Aorta (tissue), 5 donors: ENCODE measurements at regions of chr6 and their contacts with region 1.

Region 1: DNA sequence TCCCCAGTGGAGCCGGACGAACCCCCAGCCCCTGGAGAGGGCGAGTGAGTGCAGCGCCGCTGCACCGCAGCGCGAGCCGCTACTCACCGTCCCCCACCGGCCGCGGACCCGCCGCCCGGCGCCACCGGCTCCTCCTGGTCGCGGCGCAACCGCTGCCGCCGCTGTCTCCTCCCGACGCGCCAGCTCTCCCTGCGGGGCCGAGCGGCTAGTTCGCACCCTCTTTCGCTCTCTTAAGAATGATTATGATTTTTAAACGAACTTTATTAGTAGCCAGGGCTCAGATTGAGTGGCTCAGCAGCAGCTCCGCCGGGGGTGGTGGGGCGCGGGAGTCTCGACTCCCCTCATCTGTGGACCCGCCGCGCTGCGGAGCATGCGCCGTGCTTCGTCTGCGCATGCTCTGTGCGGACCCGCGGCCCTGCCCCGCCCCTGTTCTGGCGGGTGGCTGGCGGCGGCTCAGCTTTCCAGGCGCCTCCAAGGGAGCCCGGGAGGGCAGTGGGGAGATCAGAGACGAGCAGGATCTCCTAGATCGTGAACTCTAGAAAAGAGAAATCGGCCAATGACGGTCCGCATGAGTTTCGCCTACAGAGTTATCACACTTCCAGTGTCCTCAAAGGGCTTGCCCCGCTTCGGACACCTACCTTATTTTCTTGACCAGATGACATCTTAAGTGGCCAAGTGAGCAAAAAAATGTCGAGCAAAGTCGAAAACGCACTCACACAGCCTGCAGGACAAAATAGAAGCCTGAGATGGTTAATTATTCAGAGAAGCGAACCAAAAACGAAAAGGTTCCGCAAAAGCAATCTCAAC is at the start of gene RAB23:
- DNase-seq: peak; percentile 89 to 94
- ATAC-seq: peak; percentile 97
- H3K4me3 ChIP-seq: peak within 1 kb of the TSS; percentile 85 to 94
- H3K27ac ChIP-seq: peak within 1 kb of the TSS; percentile 58 to 93
- H3K4me1 ChIP-seq: no peaks in the 10 kb centered on the region
- H3K27me3 ChIP-seq: no peaks in the 10 kb centered on the region
- total RNA-seq, gene RAB23: 55.9 to 59.2 TPM

Region 2: DNA sequence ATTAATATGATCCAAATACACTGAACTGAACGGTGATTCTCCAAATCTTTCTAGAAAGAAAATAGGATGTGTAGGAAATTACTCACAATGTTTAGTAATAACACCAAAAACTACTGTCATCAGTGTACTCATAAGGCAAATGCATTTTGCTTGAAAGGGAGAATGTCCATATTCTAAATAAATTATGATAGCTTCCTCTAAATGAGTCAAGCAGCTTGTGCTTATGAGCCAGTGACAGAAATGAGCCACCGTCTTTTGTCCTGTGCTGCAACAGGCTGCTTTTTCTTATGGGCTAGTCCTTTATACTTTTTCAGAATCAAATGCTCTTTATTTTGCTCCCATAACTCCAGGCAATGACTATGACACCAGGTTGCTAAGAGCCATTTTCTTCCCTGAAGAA is 136.7 kb before region 1 on chr6:
- intact Hi-C with region 1: no loop called
- DNase-seq: no peak
- ATAC-seq: no peak
- H3K4me3 ChIP-seq: no peak overlapping the region
- H3K27ac ChIP-seq: no peak overlapping the region
- H3K4me1 ChIP-seq: no peaks in the 10 kb centered on the region
- H3K27me3 ChIP-seq: no peaks in the 10 kb centered on the region

Region 3: GRCh38 chr6:57172136-57173055 is 49.7 kb before region 1 on chr6 and contains the start of gene BAG2:
- intact Hi-C with region 1: loop called (anchors 5 kb)
- DNase-seq: peak; percentile 94 to 97
- ATAC-seq: peak; percentile 94
- H3K4me3 ChIP-seq: peak within 1 kb of the TSS; percentile 83 to 98
- H3K27ac ChIP-seq: peak within 1 kb of the TSS; percentile 64 to 88
- H3K4me1 ChIP-seq: peaks cover 0 to 4% of the 10 kb centered on the region in 2 donors
- H3K27me3 ChIP-seq: no peaks in the 10 kb centered on the region
- total RNA-seq, gene BAG2: 18.8 to 32.9 TPM

Region 4: DNA sequence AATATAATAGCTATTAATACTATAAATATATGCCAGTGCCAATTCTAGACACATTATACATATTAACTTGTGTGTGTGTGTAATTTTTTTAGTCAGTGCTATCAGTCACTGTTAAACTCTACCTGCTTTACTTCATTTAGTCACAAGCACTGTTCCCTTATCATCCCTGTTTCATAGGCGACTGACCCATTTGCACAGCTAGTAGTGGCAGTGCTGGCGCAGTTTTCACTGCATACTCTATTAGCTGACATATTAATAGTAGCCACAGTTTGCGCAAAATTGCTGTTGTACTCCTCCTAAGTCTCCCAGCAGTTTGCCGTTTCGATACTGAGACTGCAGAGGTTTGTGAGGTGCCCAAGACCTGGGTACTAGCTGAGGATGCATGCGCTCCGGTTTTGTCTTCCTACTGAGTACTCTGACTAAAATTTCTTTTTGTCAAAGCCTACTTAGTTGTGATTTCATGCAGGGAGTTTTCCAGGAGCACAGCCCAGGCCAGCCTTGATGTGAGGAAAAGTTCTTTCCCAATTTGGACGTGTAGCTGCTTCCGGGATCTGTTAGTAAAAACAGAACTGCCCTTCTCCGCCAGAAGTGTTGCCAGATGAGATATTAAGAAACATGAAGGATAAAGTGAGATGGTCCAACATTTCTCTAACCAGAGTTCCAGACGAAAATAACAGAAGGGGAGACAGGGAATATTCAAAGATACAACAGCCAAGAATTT is 44.4 kb before region 1 on chr6:
- intact Hi-C with region 1: loop called (anchors 5 kb)
- DNase-seq: peak; percentile 65 to 74
- ATAC-seq: peak; percentile 71
- H3K4me3 ChIP-seq: peak overlapping the region in 1 of 2 donors; percentile 9
- H3K27ac ChIP-seq: peak overlapping the region; percentile 73 to 92
- H3K4me1 ChIP-seq: peaks cover 0 to 8% of the 10 kb centered on the region in 2 donors
- H3K27me3 ChIP-seq: no peaks in the 10 kb centered on the region

Region 5: DNA sequence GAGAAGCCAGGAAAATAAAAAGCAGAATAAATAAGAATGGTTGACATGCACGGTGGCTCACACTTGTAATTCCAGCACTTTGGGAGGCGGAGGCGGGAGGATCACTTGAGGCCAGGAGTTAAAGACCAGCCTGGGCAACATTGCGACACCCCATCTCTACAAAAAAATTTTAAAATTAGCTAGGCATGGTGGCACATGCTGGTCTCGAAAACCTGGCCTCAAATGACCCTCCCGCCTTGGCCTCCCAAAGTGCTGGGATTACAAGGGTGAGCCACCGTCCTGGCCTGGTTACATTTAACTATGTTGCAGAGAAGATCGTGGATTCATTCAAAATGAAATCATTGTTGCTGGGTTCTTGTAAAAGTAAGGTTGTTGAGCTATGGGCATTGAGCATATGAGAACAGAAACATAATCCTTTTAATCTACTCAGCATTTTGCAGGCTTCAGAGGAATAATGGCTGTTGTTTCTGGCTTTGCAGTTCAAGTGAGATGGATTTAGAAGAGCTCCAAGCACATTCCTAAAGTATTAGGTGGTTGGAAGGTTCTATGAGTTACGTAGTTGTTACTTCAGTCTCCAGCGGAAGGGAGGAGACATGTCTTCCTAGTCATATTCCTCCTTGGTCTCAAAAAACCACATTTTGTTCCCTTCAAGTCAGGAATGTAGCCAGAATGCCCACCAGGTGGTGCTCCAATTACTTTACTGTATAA is 45.6 kb after region 1 on chr6:
- intact Hi-C with region 1: loop called in 1 of 2 experiments (anchors 5 kb)
- DNase-seq: peak in 1 of 2 donors; percentile 75
- ATAC-seq: peak; percentile 94
- H3K4me3 ChIP-seq: no peak overlapping the region
- H3K27ac ChIP-seq: peak overlapping the region in 1 of 2 donors; percentile 76
- H3K4me1 ChIP-seq: peaks cover 0 to 22% of the 10 kb centered on the region in 2 donors
- H3K27me3 ChIP-seq: no peaks in the 10 kb centered on the region

Region 6: GRCh38 chr6:57283911-57284455 is 61.8 kb after region 1 on chr6:
- intact Hi-C with region 1: no loop called
- DNase-seq: no peak
- ATAC-seq: no peak
- H3K4me3 ChIP-seq: no peak overlapping the region
- H3K27ac ChIP-seq: no peak overlapping the region
- H3K4me1 ChIP-seq: no peaks in the 10 kb centered on the region
- H3K27me3 ChIP-seq: no peaks in the 10 kb centered on the region